Calu3 (cell line): ENCODE measurements at regions of chr16 and their contacts with region 1.

Region 1: DNA sequence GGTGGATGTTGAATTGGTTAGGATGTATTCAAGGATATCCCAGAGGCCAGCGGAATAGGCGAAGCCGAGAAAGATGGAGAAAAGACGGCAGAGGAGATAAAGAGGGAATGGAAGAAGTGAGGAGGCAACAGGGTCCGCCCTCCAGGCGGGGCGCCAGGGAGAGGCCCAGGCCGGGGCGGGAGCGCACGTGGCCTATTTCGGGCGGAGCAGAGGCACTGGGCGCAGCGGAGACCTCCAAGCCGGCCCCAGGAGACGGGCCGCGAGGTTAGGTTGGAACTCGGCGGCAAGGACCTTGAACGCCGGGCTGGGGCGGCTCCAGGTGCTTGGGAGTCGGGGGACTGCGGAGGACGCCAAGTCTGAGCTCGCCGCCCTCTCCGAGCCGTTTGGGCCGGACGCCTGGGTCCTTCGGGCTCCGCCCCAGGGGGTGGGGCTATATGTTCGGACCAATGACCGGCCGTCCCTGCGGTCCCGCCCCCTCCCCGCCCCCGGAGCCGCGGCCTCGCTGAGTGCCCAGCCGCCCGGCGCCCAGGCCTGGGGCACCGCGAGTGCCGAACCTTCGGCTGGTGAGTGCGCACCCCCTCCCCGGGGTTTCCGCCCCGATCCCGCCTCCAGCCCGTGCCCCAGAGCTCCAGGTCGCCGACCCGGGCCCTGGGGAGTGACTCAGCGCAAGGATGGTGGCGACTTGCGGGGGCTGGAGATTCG is at the start of gene ZNF771:
- DNase-seq: peak; percentile 97
- H3K4me3 Mint-ChIP-seq: peak within 1 kb of the TSS; percentile 72
- H3K27ac Mint-ChIP-seq: peak within 1 kb of the TSS; percentile 76
- H3K4me1 Mint-ChIP-seq: peaks cover 25% of the 10 kb centered on the region
- H3K27me3 Mint-ChIP-seq: no peaks in the 10 kb centered on the region
- CTCF ChIP-seq: no peak
- total RNA-seq, gene ZNF771: 11.3 and 12.2 TPM in 2 replicates

Region 2: GRCh38 chr16:30032083-30032819 is 375.0 kb before region 1 on chr16:
- CTCF ChIA-PET with region 1: no interaction called
- intact Hi-C with region 1: no loop called
- DNase-seq: peak; percentile 74
- H3K4me3 Mint-ChIP-seq: peak overlapping the region; percentile 18
- H3K27ac Mint-ChIP-seq: no peak overlapping the region
- H3K4me1 Mint-ChIP-seq: peaks cover 9% of the 10 kb centered on the region
- H3K27me3 Mint-ChIP-seq: peaks cover 86% of the 10 kb centered on the region
- CTCF ChIP-seq: peak; percentile 93

Region 3: GRCh38 chr16:30131869-30132475 is 275.3 kb before region 1 on chr16:
- CTCF ChIA-PET with region 1: no interaction called
- intact Hi-C with region 1: no loop called
- DNase-seq: no peak
- H3K4me3 Mint-ChIP-seq: no peak overlapping the region
- H3K27ac Mint-ChIP-seq: no peak overlapping the region
- H3K4me1 Mint-ChIP-seq: no peaks in the 10 kb centered on the region
- H3K27me3 Mint-ChIP-seq: no peaks in the 10 kb centered on the region
- CTCF ChIP-seq: no peak

Region 4: GRCh38 chr16:30370444-30371247 is 36.6 kb before region 1 on chr16 and contains the start of gene TBC1D10B:
- CTCF ChIA-PET with region 1: interaction called, 21 read pairs
- intact Hi-C with region 1: no loop called
- DNase-seq: peak; percentile 99
- H3K4me3 Mint-ChIP-seq: peak within 1 kb of the TSS; percentile 86
- H3K27ac Mint-ChIP-seq: peak within 1 kb of the TSS; percentile 99
- H3K4me1 Mint-ChIP-seq: peaks cover 44% of the 10 kb centered on the region
- H3K27me3 Mint-ChIP-seq: peaks cover 14% of the 10 kb centered on the region
- CTCF ChIP-seq: no peak
- total RNA-seq, gene TBC1D10B: 66.4 and 69.5 TPM in 2 replicates

Region 5: GRCh38 chr16:30395155-30395991 is 11.9 kb before region 1 on chr16 and contains the start of gene ZNF48:
- CTCF ChIA-PET with region 1: interaction called, 24 read pairs
- intact Hi-C with region 1: no loop called
- DNase-seq: peak; percentile 93
- H3K4me3 Mint-ChIP-seq: peak within 1 kb of the TSS; percentile 79
- H3K27ac Mint-ChIP-seq: peak within 1 kb of the TSS; percentile 78
- H3K4me1 Mint-ChIP-seq: peaks cover 31% of the 10 kb centered on the region
- H3K27me3 Mint-ChIP-seq: no peaks in the 10 kb centered on the region
- CTCF ChIP-seq: peak; percentile 70
- total RNA-seq, gene ZNF48: 21.2 and 24.8 TPM in 2 replicates

Region 6: DNA sequence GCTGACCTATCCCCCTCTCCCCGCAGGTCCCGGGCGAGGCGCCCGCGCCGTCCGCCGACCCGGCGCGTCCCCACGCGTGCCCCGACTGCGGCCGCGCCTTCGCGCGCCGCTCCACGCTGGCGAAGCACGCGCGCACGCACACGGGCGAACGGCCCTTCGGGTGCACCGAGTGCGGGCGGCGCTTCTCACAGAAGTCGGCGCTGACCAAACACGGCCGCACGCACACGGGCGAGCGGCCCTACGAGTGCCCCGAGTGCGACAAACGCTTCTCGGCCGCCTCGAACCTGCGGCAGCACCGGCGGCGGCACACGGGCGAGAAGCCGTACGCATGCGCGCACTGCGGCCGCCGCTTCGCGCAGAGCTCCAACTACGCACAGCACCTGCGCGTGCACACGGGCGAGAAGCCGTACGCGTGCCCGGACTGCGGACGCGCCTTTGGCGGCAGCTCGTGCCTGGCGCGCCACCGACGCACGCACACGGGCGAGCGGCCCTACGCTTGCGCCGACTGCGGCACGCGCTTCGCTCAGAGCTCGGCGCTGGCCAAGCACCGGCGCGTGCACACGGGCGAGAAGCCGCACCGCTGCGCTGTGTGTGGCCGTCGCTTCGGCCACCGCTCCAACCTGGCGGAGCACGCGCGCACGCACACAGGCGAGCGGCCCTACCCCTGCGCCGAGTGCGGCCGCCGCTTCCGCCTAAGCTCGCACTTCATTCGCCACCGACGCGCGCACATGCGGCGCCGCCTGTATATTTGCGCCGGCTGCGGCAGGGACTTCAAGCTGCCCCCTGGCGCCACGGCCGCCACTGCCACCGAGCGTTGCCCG is 10.5 kb after region 1 on chr16:
- CTCF ChIA-PET with region 1: interaction called, 20 read pairs
- intact Hi-C with region 1: no loop called
- DNase-seq: peak; percentile 94
- H3K4me3 Mint-ChIP-seq: peak overlapping the region; percentile 64
- H3K27ac Mint-ChIP-seq: no peak overlapping the region
- H3K4me1 Mint-ChIP-seq: peaks cover 26% of the 10 kb centered on the region
- H3K27me3 Mint-ChIP-seq: no peaks in the 10 kb centered on the region
- CTCF ChIP-seq: peak; percentile 24

Region 7: DNA sequence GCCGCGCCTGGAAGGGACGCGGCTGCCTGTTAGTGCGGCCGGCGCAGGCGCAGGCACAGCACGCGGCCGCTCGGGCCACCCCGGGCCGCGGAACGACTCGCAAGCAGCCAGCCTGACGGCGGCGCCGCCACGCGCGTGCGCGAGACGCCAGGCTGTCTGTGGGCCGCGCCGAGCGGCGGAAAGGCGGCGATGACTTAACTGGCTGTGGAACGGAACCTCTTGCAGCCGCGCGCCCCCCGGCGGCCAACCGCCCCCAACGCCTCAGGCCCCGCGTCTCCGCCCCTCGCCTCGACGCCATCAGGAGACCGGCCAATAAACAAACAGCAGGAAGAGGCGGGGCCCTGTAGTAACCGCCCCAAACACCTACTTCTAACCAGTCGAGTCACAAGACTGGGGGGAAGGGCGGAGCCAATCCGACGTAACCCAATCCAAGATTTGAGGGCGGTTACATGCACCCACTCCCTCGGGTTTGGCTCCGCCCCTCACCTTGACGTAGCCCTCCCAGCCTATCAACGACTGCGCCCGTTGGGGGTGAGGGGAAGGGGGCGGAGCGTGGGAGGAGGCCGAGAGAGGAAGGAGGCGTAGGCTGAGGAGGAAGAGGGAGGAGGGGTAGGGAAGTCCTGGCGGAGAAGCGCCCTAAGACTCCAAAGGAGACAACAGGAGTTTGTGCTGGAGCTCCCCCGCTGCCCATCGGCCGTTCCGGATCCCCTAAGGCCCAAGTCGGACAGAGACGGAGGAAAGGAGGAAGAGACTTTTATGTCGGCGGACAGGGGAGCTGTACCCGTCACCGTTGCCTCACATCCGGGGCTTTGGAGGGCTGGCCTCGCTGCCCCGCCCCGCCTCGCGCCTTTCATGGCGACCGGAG is 250.8 kb after region 1 on chr16 and contains the start of gene FBRS:
- CTCF ChIA-PET with region 1: no interaction called
- intact Hi-C with region 1: no loop called
- DNase-seq: peak; percentile 100
- H3K4me3 Mint-ChIP-seq: peak within 1 kb of the TSS; percentile 91
- H3K27ac Mint-ChIP-seq: peak within 1 kb of the TSS; percentile 99
- H3K4me1 Mint-ChIP-seq: peaks cover 28% of the 10 kb centered on the region
- H3K27me3 Mint-ChIP-seq: no peaks in the 10 kb centered on the region
- CTCF ChIP-seq: peak; percentile 84
- total RNA-seq, gene FBRS: 113 and 114 TPM in 2 replicates